ENCODE measurements at regions of chr1 and their contacts with region 1.

Region 1: GRCh38 chr1:114428083-114428749 is 82.8 kb downstream of the TRIM33 start:
- DNase-seq: peak in 1 of 2 experiments; percentile 8
- ATAC-seq: no peak
- H3K4me3 ChIP-seq: no peak overlapping the region
- H3K27ac ChIP-seq: no peak overlapping the region
- H3K4me1 ChIP-seq: no peaks in the 10 kb centered on the region
- CTCF ChIP-seq: peak; percentile 43
- EP300 ChIP-seq: no peak
- POLR2A ChIP-seq: no peak
- RAD21 ChIP-seq: peak; percentile 8 to 31; a peak in 1 of 5 replicates

Region 2: GRCh38 chr1:114346480-114347029 is 81.7 kb before region 1 on chr1:
- CTCF ChIA-PET with region 1: interaction called, 18 read pairs
- POLR2A ChIA-PET with region 1: no interaction called
- DNase-seq: peak; percentile 81 to 91
- ATAC-seq: peak; percentile 98 to 100
- H3K4me3 ChIP-seq: peak overlapping the region; percentile 39
- H3K27ac ChIP-seq: peak overlapping the region; percentile 64 to 69
- H3K4me1 ChIP-seq: no peaks in the 10 kb centered on the region; the same call in 2 of the 3 replicates
- CTCF ChIP-seq: peak; percentile 99
- EP300 ChIP-seq: no peak
- POLR2A ChIP-seq: no peak
- RAD21 ChIP-seq: peak; percentile 86 to 94

Region 3: GRCh38 chr1:114849975-114850374 is 421.8 kb after region 1 on chr1:
- CTCF ChIA-PET with region 1: no interaction called
- POLR2A ChIA-PET with region 1: no interaction called
- DNase-seq: no peak
- ATAC-seq: no peak
- H3K4me3 ChIP-seq: no peak overlapping the region
- H3K27ac ChIP-seq: no peak overlapping the region
- H3K4me1 ChIP-seq: no peaks in the 10 kb centered on the region
- CTCF ChIP-seq: no peak
- EP300 ChIP-seq: no peak
- POLR2A ChIP-seq: no peak
- RAD21 ChIP-seq: no peak